AG04449 (cell line): ENCODE measurements at regions of chr5 and their contacts with region 1.

Region 1: GRCh38 chr5:71782771-71783770 is 64.0 kb downstream of the CARTPT start:
- DNase-seq: no peak
- H3K4me3 ChIP-seq: no peak overlapping the region
- CTCF ChIP-seq: peak; percentile 79

Region 2: DNA sequence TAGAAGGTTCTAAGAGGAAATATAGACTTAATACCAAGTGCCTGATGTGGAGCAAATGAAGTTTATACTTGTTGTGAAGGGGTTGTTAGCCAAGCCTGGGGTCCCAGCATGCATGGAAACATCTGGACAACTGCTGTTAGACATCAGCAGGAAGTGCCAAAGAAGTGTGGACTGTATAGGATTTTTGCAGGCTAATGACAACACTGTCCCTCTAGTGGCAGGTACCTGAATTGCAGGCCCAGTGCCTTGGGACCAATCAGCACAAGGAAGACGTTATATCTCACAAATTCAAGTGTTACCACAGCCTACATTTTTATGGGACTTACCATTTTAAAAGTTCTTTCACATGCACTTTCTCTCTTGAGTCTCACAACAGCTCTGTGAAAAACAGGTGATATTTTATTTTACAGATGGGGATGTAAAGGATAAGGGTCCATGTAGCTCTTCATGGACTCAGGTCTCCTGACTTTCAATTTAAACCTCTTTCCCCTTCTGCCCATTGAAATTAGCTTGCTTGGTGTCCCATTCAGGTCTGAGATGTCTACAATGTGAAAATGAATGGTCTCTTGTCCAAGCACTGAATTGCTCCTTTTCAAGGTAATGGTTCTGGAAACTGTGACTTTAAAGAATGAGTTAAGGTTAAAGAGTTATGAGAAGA is 235.2 kb after region 1 on chr5:
- CTCF ChIA-PET with region 1: interaction called, 13 read pairs
- POLR2A ChIA-PET with region 1: no interaction called
- DNase-seq: no peak
- H3K4me3 ChIP-seq: no peak overlapping the region
- CTCF ChIP-seq: peak; percentile 78

Region 3: GRCh38 chr5:72108202-72109061 is 325.4 kb after region 1 on chr5:
- CTCF ChIA-PET with region 1: interaction called, 17 read pairs
- POLR2A ChIA-PET with region 1: interaction called, 3 read pairs
- DNase-seq: no peak
- H3K4me3 ChIP-seq: peak overlapping the region; percentile 90
- CTCF ChIP-seq: no peak

Region 4: DNA sequence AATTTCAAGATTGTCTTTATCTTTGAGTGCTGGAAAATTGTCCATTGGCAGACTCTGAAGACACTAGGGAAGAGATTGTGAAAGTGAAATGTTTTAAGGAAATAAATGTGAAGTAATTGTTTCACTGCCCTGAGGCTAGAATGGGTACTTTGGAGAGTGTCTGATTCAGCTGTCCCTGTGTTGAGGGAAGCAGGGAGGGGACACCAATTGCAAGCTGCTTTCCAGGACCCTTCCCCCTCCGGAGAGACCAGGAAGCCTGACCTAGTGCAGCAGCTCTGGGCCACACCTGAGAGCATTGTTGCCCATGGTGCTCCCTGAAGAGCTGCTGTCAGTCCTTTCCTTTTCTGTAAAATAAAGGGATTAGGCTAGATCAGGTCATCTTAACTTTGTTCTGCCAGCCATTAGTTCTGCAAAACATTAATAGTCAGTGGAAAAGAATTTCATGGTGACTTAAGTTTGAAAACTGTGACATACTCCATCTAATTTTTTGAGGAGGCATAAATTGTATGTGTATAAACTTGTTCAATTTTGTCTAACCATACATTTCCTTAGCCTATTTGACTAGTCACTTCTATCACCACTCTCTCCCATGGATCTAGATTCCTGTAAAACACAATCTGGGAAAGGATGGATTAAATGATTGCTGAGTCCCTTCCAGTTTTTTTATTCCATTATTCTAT is 343.0 kb after region 1 on chr5:
- CTCF ChIA-PET with region 1: interaction called, 16 read pairs
- POLR2A ChIA-PET with region 1: no interaction called
- DNase-seq: no peak
- H3K4me3 ChIP-seq: no peak overlapping the region
- CTCF ChIP-seq: no peak

Region 5: DNA sequence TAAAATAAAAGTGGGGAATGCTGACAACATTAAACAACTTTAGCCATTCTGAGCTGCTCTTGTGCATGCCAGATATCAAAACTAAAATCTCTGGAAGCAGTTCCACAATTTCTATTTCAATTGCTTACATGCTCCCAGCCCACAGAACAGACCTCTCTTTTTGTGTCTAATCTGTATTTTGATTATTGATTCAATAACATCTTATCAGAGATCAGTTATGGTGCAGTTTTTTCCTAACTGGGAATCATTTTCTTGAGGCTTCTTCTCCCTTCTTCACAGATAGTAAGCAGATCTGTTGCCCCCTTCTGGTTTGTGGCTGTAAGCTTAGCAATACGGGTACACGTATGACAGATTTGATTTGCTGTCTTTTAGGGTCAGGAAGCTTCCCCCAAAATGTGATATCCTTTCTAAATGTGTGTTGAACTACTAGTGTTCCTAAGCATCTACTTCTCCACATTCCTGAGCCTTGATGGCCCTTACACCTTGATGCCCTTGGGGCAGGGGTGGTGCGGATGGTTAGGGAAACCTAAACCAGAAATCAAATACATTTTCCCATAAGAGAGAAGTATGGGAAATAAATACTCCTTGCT is 497.6 kb after region 1 on chr5:
- CTCF ChIA-PET with region 1: interaction called, 13 read pairs
- POLR2A ChIA-PET with region 1: no interaction called
- DNase-seq: no peak
- H3K4me3 ChIP-seq: no peak overlapping the region
- CTCF ChIP-seq: peak; percentile 63